Activated naive CD4-positive, alpha-beta T cell treated with anti-CD3 and anti-CD28 coated beads for 36 hours (primary cell): ENCODE measurements at regions of chrX and their contacts with region 1.

Region 1: GRCh38 chrX:41923257-41923969 is at the start of gene CASK:
- DNase-seq: peak; percentile 91
- H3K4me3 Mint-ChIP-seq: peak within 1 kb of the TSS; percentile 82
- H3K27ac Mint-ChIP-seq: peak within 1 kb of the TSS; percentile 73
- H3K4me1 Mint-ChIP-seq: peaks cover 24% of the 10 kb centered on the region
- H3K27me3 Mint-ChIP-seq: no peaks in the 10 kb centered on the region
- total RNA-seq, gene CASK: 15.4 to 18.9 TPM

Region 2: GRCh38 chrX:40671126-40671525 is 1252.3 kb before region 1 on chrX:
- CTCF ChIA-PET with region 1: no interaction called
- intact Hi-C with region 1: no loop called
- DNase-seq: no peak
- H3K4me3 Mint-ChIP-seq: no peak overlapping the region
- H3K27ac Mint-ChIP-seq: no peak overlapping the region
- H3K4me1 Mint-ChIP-seq: no peaks in the 10 kb centered on the region
- H3K27me3 Mint-ChIP-seq: no peaks in the 10 kb centered on the region

Region 3: GRCh38 chrX:41561045-41561444 is 362.4 kb before region 1 on chrX:
- CTCF ChIA-PET with region 1: no interaction called
- intact Hi-C with region 1: loop called (anchors 2 kb)
- DNase-seq: peak; percentile 56
- H3K4me3 Mint-ChIP-seq: no peak overlapping the region
- H3K27ac Mint-ChIP-seq: peak overlapping the region; percentile 41
- H3K4me1 Mint-ChIP-seq: peaks cover 28% of the 10 kb centered on the region
- H3K27me3 Mint-ChIP-seq: no peaks in the 10 kb centered on the region

Region 4: DNA sequence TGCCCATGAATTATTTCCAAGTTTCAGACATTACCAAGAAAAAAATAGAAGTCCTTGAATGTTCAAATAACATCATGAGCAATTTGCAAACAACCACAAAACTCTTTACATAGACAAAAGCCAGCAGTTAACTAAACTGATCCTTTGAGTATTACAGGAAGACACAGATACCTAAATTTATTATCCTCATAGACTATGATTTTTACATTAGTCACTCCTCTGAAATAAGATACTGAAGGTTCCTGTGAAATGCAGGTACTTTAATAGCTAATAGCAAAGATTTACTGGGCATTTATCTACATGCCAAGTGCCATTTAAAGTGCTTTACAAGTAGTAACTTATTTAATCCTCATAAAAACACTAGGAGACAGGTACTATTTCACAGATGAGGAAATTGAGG is 161.7 kb before region 1 on chrX:
- CTCF ChIA-PET with region 1: no interaction called
- intact Hi-C with region 1: no loop called
- DNase-seq: no peak
- H3K4me3 Mint-ChIP-seq: no peak overlapping the region
- H3K27ac Mint-ChIP-seq: no peak overlapping the region
- H3K4me1 Mint-ChIP-seq: peaks cover 3% of the 10 kb centered on the region
- H3K27me3 Mint-ChIP-seq: no peaks in the 10 kb centered on the region

Region 5: DNA sequence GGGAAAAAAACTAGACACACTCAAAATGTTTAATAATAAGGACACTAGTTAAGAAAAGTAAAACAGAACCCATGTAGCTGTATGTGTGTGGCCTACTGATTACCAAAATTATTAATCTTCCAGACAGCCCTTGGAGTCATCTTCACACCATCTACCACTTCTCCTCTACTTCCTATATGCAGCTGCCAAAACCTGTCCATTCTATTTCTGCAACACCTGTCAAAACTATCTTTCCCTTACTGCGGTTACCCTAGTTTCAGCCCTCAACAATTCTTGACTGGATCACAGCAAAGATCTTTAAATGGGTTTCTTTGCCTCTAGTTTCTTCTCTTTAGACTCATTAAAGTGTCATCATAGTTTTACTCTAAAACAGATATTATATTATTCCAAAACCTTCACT is 126.8 kb before region 1 on chrX:
- CTCF ChIA-PET with region 1: interaction called, 3 read pairs
- intact Hi-C with region 1: loop called (anchors 2 kb)
- DNase-seq: no peak
- H3K4me3 Mint-ChIP-seq: no peak overlapping the region
- H3K27ac Mint-ChIP-seq: no peak overlapping the region
- H3K4me1 Mint-ChIP-seq: peaks cover 43% of the 10 kb centered on the region
- H3K27me3 Mint-ChIP-seq: no peaks in the 10 kb centered on the region

Region 6: GRCh38 chrX:41824551-41824950 is 98.9 kb before region 1 on chrX:
- CTCF ChIA-PET with region 1: no interaction called
- intact Hi-C with region 1: no loop called
- DNase-seq: no peak
- H3K4me3 Mint-ChIP-seq: no peak overlapping the region
- H3K27ac Mint-ChIP-seq: no peak overlapping the region
- H3K4me1 Mint-ChIP-seq: peaks cover 2% of the 10 kb centered on the region
- H3K27me3 Mint-ChIP-seq: no peaks in the 10 kb centered on the region

Region 7: GRCh38 chrX:41837270-41837944 is 86.0 kb before region 1 on chrX:
- CTCF ChIA-PET with region 1: no interaction called
- intact Hi-C with region 1: no loop called
- DNase-seq: no peak
- H3K4me3 Mint-ChIP-seq: no peak overlapping the region
- H3K27ac Mint-ChIP-seq: no peak overlapping the region
- H3K4me1 Mint-ChIP-seq: peaks cover 11% of the 10 kb centered on the region
- H3K27me3 Mint-ChIP-seq: no peaks in the 10 kb centered on the region

Region 8: GRCh38 chrX:41906515-41907165 is 16.8 kb before region 1 on chrX:
- CTCF ChIA-PET with region 1: no interaction called
- intact Hi-C with region 1: loop called (anchors 1 kb)
- DNase-seq: peak; percentile 55
- H3K4me3 Mint-ChIP-seq: no peak overlapping the region
- H3K27ac Mint-ChIP-seq: peak overlapping the region; percentile 79
- H3K4me1 Mint-ChIP-seq: peaks cover 44% of the 10 kb centered on the region
- H3K27me3 Mint-ChIP-seq: no peaks in the 10 kb centered on the region

Region 9: GRCh38 chrX:42948723-42949657 is 1025.6 kb after region 1 on chrX:
- CTCF ChIA-PET with region 1: no interaction called
- intact Hi-C with region 1: loop called (anchors 5 kb)
- DNase-seq: no peak
- H3K4me3 Mint-ChIP-seq: no peak overlapping the region
- H3K27ac Mint-ChIP-seq: peak overlapping the region; percentile 70
- H3K4me1 Mint-ChIP-seq: peaks cover 44% of the 10 kb centered on the region
- H3K27me3 Mint-ChIP-seq: no peaks in the 10 kb centered on the region

Region 10: GRCh38 chrX:43654431-43655150 is 1731.2 kb after region 1 on chrX:
- CTCF ChIA-PET with region 1: no interaction called
- intact Hi-C with region 1: loop called (anchors 10 kb)
- DNase-seq: peak; percentile 79
- H3K4me3 Mint-ChIP-seq: peak overlapping the region; percentile 86
- H3K27ac Mint-ChIP-seq: peak overlapping the region; percentile 92
- H3K4me1 Mint-ChIP-seq: peaks cover 9% of the 10 kb centered on the region
- H3K27me3 Mint-ChIP-seq: peaks cover 2% of the 10 kb centered on the region